ENCODE measurements at regions of chr2 and their contacts with region 1.

Region 1: GRCh38 chr2:134411828-134412638 is 158.2 kb downstream of the MGAT5 start:
- DNase-seq: peak; percentile 64
- ATAC-seq: peak; percentile 97
- H3K4me3 Mint-ChIP-seq: no peak overlapping the region
- H3K27ac Mint-ChIP-seq: no peak overlapping the region
- H3K4me1 Mint-ChIP-seq: peaks cover 13% of the 10 kb centered on the region
- H3K27me3 Mint-ChIP-seq: no peaks in the 10 kb centered on the region
- CTCF ChIP-seq: 0 out of 2 replicates have a peak, but pooled peaks have one; percentile 28

Region 2: DNA sequence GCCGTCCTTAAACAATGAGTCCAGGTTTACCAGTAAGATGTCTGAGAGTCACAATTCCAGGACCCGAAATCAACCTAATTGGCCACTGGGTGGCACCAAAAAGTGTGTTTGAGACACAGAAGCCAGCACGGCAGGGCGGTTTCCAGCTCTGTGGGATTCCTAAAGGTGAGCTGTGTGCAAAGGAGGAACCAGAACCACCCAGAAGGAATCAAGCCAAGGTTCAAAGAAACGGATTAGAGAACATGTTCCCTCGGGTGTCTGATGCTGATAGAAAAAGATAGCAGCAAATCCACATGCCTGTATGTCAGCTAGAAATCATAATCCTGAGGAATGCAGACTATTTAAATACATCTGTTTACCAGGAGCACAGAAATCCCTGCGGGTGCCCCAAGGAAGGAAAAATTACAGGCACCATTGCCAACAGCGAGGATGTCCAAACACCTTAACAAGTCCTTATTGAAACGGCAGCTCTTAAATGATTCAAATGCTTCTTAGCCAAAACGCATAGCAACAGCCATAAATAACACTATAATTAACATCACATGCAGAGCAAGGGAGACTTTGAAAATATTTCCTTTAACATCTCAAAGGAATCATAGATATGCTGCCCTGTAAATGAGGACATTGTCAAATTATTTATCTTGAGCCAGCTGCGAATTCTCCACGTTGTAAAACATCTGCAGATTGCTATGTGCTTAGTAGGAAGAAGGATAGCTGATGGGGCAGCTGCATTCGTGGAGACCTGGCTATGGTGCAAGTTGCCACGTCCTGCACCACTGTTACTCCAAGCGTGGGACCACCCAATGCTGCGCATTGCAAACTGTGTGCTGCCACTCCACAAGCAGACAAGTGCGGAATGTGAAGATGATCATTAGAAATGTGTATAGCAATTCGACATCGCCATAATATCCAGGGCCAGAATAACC is 525.0 kb before region 1 on chr2:
- CTCF ChIA-PET with region 1: interaction called, 20 read pairs
- POLR2A ChIA-PET with region 1: no interaction called
- DNase-seq: peak; percentile 75
- ATAC-seq: peak; percentile 88
- H3K4me3 Mint-ChIP-seq: no peak overlapping the region
- H3K27ac Mint-ChIP-seq: no peak overlapping the region
- H3K4me1 Mint-ChIP-seq: peaks cover 18% of the 10 kb centered on the region
- H3K27me3 Mint-ChIP-seq: no peaks in the 10 kb centered on the region; the same call in none of the 2 replicates
- CTCF ChIP-seq: peak; percentile 32; the same call in 1 of the 2 replicates

Region 3: DNA sequence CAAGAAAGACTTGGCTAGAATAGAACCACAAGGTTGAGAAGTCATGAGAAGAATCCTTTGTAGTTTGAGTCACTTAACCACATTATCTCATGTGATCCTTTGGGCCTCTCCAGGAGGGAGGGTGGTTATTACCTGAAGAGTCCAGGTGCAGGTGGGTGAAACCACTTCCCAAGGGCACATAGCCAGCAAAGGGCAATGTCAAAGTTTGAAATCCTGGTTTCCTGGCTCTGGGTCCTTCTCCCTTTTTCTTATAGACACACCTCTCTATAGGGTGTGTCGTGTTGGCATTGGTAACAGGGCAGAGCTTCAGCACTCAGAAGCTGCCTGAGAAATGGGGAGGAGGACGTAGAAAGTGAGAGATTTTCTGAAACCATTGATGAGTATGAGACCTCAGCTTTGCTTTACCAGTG is 20.3 kb before region 1 on chr2:
- CTCF ChIA-PET with region 1: interaction called, 28 read pairs
- POLR2A ChIA-PET with region 1: no interaction called
- DNase-seq: no peak
- ATAC-seq: no peak
- H3K4me3 Mint-ChIP-seq: no peak overlapping the region
- H3K27ac Mint-ChIP-seq: no peak overlapping the region
- H3K4me1 Mint-ChIP-seq: no peaks in the 10 kb centered on the region
- H3K27me3 Mint-ChIP-seq: no peaks in the 10 kb centered on the region
- CTCF ChIP-seq: no peak

Region 4: DNA sequence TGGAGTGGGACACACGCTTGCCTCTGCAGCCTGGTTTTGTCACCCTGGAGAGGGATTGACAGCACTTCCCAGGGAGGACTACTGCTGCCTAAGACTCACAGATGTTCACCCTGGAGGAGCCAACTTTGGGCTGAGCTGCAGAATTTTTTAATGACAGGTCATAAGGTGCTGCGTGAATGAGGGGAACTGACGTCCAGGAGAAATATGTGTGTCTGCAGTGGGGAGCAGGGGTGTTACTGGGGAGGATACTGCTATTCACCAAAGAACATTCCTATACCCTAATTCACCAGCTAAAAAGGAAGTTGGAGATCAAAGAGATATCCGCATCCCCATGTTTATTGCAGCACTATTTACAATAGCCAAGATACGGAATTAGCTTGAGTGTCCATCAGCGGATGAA is 13.7 kb before region 1 on chr2:
- CTCF ChIA-PET with region 1: interaction called, 28 read pairs
- POLR2A ChIA-PET with region 1: interaction called, 3 read pairs
- DNase-seq: no peak
- ATAC-seq: no peak
- H3K4me3 Mint-ChIP-seq: no peak overlapping the region
- H3K27ac Mint-ChIP-seq: no peak overlapping the region
- H3K4me1 Mint-ChIP-seq: peaks cover 15% of the 10 kb centered on the region
- H3K27me3 Mint-ChIP-seq: no peaks in the 10 kb centered on the region
- CTCF ChIP-seq: no peak

Region 5: GRCh38 chr2:134482131-134482723 is 70.2 kb after region 1 on chr2:
- CTCF ChIA-PET with region 1: no interaction called
- POLR2A ChIA-PET with region 1: no interaction called
- DNase-seq: no peak
- ATAC-seq: no peak
- H3K4me3 Mint-ChIP-seq: no peak overlapping the region
- H3K27ac Mint-ChIP-seq: no peak overlapping the region
- H3K4me1 Mint-ChIP-seq: no peaks in the 10 kb centered on the region
- H3K27me3 Mint-ChIP-seq: no peaks in the 10 kb centered on the region; the same call in 1 of the 2 replicates
- CTCF ChIP-seq: no peak